ENCODE measurements at regions of chr22 and their contacts with region 1.

Region 1: DNA sequence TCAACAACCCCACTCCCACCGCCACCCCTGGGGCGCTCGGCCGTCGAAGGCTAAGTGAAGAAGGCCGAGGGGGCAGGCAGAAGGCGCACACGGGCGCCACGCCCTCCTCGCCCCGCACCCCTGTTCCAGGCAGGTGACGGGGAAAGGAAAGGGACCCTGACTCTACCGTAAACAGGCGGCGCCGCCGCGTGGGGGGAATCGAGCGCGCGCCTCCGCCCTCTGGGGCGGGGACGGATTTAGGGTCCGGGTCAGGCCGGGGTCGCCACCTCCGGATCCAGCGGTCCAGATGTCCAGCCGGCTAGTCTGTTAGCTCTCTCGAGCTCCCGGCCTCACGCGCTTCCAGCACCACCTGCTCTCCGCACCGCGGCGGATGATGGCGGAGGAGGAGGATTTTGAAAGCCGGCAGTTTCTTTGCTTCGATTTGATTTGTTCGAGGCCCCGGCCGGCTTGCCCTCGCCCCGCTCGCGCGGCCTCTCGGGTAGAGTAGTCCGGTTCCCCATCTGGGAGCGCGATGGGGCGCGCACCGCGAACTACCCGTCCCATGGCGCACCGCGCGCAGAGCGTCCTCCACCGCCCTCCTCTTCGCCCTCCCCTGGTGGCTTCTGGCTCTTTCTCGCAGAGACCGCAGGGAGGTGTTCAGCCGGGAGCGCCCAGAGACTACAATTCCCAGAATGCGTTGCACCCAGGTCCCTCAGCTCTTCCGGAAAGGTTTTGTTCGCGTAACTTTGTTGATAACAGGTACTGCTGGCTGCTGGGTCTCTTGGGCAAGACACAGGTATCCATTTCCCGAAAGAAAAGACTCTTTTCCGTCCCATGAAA is at the start of gene RANGAP1:
- DNase-seq: peak; percentile 99
- ATAC-seq: peak; percentile 99
- total RNA-seq, gene RANGAP1: 42.8 TPM

Region 2: GRCh38 chr22:41197038-41197972 is 88.7 kb before region 1 on chr22:
- intact Hi-C with region 1: loop called (anchors 5 kb)
- DNase-seq: peak; percentile 90
- ATAC-seq: peak; percentile 96

Measured in Right ventricle myocardium superior (tissue), 1 donor.